Right ventricle myocardium inferior (tissue), 1 donor: ENCODE measurements at regions of chr19 and their contacts with region 1.

Region 1: DNA sequence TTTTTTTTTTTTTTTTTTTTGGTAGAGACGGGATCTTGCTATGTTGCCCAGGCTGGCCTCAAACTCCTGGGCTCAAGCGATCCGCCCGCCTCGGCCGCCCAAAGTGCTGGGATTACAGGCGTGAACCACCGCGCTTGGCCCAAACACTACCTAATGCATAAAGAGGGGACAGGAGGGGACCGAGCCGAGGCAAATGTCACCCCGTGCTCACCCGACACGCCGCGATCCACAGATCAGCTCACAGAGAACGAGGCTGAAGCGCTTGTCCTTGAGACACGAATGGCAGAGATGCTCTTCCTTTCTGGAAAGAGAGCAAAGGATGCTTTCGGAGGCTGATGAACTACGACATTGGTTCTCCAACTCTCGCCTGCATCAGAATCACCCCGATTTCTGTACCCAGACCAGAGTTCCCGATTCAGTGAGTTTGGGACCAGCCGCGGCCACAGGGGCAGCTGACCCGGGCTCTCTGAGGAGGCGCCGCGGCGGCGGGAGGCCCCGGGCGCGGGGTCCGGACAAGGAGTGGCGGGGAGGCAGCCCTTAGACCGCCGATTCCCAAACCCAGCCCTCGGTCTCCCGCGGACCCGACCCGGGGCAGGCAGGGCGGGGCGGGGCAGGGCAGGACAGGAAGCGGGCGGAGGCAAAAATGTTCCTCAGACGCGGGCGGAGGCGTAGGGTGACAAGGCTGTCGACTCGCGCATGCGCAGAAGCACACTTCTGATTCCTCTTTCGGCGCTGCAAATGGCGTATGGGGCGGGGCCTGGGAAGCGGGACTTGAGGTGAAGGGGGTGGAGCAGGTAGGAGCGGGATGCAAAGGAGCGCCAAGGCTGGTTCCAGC is at the start of gene ZNF699:
- DNase-seq: peak; percentile 99
- ATAC-seq: peak; percentile 98
- total RNA-seq, gene ZNF699: 3.5 TPM

Region 2: GRCh38 chr19:9140159-9140874 is 169.0 kb before region 1 on chr19 and contains the start of gene ZNF317:
- intact Hi-C with region 1: loop called (anchors 5 kb)
- DNase-seq: peak; percentile 97
- ATAC-seq: peak; percentile 97
- total RNA-seq, gene ZNF317: 14.7 TPM

Region 3: DNA sequence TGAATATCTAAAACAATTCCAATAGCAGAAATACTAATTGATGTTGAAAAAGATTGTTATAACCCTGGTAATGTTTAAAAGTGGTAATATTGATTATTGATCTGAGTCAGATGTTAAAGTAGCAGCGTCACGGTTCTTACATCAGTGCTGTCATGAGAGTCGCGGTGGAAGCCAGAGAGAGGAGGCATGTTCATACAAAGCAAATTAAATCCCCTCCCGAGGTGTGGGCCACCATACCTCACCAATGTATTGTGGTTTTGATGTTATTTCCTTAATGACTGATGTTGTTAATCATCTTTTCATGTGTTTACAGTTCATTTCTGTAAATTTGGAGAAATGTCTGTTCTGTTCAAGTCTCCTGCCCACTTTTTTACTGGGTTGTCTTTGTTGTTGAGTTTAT is 158.0 kb before region 1 on chr19:
- intact Hi-C with region 1: no loop called
- DNase-seq: no peak
- ATAC-seq: no peak

Region 4: GRCh38 chr19:9323919-9324583 is 14.7 kb after region 1 on chr19 and contains the start of gene ZNF559:
- intact Hi-C with region 1: loop called (anchors 2 kb)
- DNase-seq: peak; percentile 95
- ATAC-seq: peak; percentile 96
- total RNA-seq, gene ZNF559: 16.6 TPM